Posterior vena cava (tissue), 2 donors: ENCODE measurements at regions of chr12 and their contacts with region 1.

Region 1: GRCh38 chr12:92516277-92516600 is 186.6 kb upstream of the PLEKHG7 start:
- DNase-seq: no peak

Region 2: DNA sequence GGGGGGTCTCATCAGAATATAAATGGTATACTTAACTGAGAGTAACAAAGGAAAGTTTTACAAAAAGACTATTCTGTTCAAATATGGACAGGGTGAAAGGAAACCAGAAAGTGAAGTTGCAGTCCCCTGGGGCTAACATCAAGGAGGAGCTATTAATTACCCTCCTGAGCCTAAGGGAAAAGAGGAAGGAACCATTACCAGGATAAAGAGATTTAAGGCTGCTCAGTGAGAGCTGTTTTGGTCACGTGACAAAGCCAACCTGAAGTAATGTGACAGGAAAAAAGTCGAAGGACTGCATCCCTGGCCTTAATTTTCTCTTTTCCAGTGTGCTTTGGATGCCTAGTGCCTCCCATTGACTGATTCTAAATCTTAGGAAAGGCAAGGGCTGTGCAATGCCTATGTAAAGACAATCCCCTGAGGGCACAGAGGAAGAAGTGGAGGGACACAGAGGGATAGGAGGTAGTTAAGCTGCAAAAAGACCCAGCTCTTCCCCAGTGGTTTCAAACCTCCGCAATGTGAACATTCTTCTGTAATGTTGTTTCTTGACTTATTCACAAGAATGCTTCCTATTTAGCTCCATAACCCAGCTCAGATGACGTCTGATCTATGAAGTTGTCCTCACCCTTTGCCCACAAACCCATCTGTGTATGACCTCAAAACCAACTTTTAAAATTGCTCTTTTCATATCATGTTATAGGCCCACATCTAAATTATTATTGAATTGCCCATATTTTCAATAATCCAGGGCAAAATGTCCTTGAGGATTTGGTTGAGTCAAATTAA is 1146.0 kb before region 1 on chr12:
- intact Hi-C with region 1: loop called in 1 of 2 experiments (anchors 5 kb)
- DNase-seq: no peak

Region 3: GRCh38 chr12:92059976-92060375 is 456.3 kb before region 1 on chr12:
- intact Hi-C with region 1: loop called in 1 of 2 experiments (anchors 2 kb)
- DNase-seq: no peak